GM10248 (cell line): ENCODE measurements at regions of chr2 and their contacts with region 1.

Region 1: GRCh38 chr2:95022309-95023221 is 2.9 kb upstream of the MAL start:
- DNase-seq: peak; percentile 85
- CTCF ChIP-seq: peak; percentile 98

Region 2: GRCh38 chr2:95034221-95034620 is 11.7 kb after region 1 on chr2:
- CTCF ChIA-PET with region 1: interaction called, 38 read pairs
- POLR2A ChIA-PET with region 1: no interaction called
- DNase-seq: no peak
- CTCF ChIP-seq: no peak

Region 3: GRCh38 chr2:95053543-95053942 is 31.0 kb after region 1 on chr2:
- CTCF ChIA-PET with region 1: interaction called, 141 read pairs
- POLR2A ChIA-PET with region 1: no interaction called
- DNase-seq: no peak
- CTCF ChIP-seq: peak; percentile 46

Region 4: GRCh38 chr2:95115418-95115817 is 92.9 kb after region 1 on chr2:
- CTCF ChIA-PET with region 1: interaction called, 43 read pairs
- POLR2A ChIA-PET with region 1: no interaction called
- DNase-seq: peak; percentile 78
- CTCF ChIP-seq: peak; percentile 87